Activated CD4-positive, alpha-beta memory T cell treated with anti-CD3 and anti-CD28 coated beads, Interleukin-2, amount 10 ng/mL, durations not matched to agents 7 days and 5 days (primary cell): ENCODE measurements at regions of chr1 and their contacts with region 1.

Region 1: DNA sequence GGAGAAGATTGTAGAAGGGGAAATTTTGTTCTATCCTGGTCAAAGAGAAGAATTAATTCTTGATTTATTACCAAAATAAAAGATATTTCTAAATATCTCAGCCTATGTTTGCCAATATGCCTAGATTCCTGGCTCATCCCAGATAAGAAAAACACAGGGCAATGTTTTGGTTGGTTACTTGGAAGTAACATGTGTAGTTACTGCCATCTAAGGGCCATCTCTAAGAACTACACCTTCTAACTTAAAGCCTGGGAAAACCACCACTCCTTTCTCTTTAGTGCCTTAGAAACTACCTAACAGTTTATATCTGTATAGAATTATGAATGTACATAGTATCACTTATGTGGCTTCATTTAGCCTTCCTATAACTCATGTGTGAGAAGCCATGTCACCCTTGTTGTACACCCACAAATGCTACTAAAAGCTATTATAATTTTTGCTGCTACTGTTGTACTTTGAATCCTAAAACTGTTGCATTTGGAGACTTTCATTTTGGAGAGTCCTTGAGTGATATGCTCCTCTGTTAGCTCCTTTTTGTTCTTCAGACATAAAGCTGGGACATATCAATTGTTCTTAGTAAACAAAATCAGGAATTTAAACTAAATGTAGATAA is 4.5 kb downstream of the AIM2 start:
- DNase-seq: no peak
- H3K4me3 Mint-ChIP-seq: no peak overlapping the region
- H3K27ac Mint-ChIP-seq: peak overlapping the region; percentile 21
- H3K4me1 Mint-ChIP-seq: peaks cover 67% of the 10 kb centered on the region
- H3K27me3 Mint-ChIP-seq: no peaks in the 10 kb centered on the region

Region 2: GRCh38 chr1:158203693-158204457 is 868.2 kb before region 1 on chr1:
- CTCF ChIA-PET with region 1: interaction called, 18 read pairs
- POLR2A ChIA-PET with region 1: no interaction called
- DNase-seq: no peak
- H3K4me3 Mint-ChIP-seq: no peak overlapping the region
- H3K27ac Mint-ChIP-seq: no peak overlapping the region
- H3K4me1 Mint-ChIP-seq: peaks cover 2% of the 10 kb centered on the region
- H3K27me3 Mint-ChIP-seq: peaks cover 24% of the 10 kb centered on the region

Region 3: GRCh38 chr1:158506369-158506987 is 565.6 kb before region 1 on chr1:
- CTCF ChIA-PET with region 1: interaction called, 15 read pairs
- POLR2A ChIA-PET with region 1: no interaction called
- DNase-seq: peak; percentile 50
- H3K4me3 Mint-ChIP-seq: no peak overlapping the region
- H3K27ac Mint-ChIP-seq: no peak overlapping the region
- H3K4me1 Mint-ChIP-seq: no peaks in the 10 kb centered on the region
- H3K27me3 Mint-ChIP-seq: peaks cover 37% of the 10 kb centered on the region

Region 4: DNA sequence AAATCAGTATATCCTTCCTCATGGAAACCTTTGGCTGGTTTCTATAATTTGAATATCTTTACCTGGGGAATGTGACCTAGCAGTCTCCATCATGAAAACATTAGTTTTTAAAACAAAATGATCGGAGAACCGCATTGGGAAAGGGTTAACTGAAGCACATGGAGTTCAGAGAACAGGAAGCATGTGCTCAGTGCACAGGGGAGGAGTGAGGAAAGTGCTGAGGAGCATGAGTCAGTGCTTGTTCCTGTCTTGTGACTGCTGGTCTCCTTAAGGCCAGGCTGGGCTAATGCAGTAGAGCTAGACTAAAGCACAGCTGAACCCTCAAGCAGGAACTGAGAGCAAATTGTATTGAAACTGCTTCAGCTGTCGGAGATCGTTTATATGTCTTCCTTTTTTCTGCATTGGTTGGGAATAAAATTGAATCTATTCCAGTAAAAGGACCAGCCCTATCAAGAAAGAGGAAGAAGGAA is 56.6 kb before region 1 on chr1:
- CTCF ChIA-PET with region 1: interaction called, 12 read pairs
- POLR2A ChIA-PET with region 1: interaction called, 260 read pairs
- DNase-seq: peak; percentile 82
- H3K4me3 Mint-ChIP-seq: peak overlapping the region; percentile 87
- H3K27ac Mint-ChIP-seq: peak overlapping the region; percentile 86
- H3K4me1 Mint-ChIP-seq: peaks cover 61% of the 10 kb centered on the region
- H3K27me3 Mint-ChIP-seq: no peaks in the 10 kb centered on the region

Region 5: DNA sequence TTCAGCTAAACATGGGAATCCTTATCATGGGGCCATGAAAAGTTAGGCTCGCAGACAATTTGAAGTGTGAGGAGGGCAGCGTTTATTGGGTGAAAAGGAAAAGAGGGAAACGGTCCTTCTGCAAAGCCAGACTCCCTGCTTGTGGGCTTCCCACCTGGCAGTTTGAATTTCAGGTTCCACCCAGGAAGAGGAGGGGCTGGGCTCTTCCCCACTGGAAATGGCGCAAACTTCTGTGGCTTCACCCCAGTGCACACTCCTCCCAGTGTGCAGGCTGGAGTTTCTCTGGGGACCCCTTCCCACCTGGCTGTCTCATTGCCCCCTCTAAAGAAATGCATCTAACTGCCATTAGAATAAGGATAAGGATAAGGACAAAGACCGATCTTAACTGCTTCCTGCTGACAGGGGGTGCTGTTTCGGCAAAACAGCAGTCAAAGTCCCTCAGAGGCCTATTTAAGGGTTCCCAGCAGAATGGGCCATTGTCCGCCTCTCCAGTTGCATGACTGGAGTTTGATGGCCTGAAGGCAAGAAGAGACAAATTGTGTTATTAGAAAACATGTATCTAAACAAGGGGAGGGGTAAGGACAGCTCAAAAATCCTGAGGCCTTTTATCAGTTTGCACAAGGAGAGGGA is 15.9 kb before region 1 on chr1:
- CTCF ChIA-PET with region 1: interaction called, 9 read pairs
- POLR2A ChIA-PET with region 1: interaction called, 13 read pairs
- DNase-seq: no peak
- H3K4me3 Mint-ChIP-seq: no peak overlapping the region
- H3K27ac Mint-ChIP-seq: peak overlapping the region; percentile 40
- H3K4me1 Mint-ChIP-seq: peaks cover 48% of the 10 kb centered on the region
- H3K27me3 Mint-ChIP-seq: no peaks in the 10 kb centered on the region

Region 6: GRCh38 chr1:159089184-159089791 is 17.2 kb after region 1 on chr1:
- CTCF ChIA-PET with region 1: interaction called, 47 read pairs
- POLR2A ChIA-PET with region 1: interaction called, 112 read pairs
- DNase-seq: no peak
- H3K4me3 Mint-ChIP-seq: no peak overlapping the region
- H3K27ac Mint-ChIP-seq: no peak overlapping the region
- H3K4me1 Mint-ChIP-seq: peaks cover 55% of the 10 kb centered on the region
- H3K27me3 Mint-ChIP-seq: no peaks in the 10 kb centered on the region